Testis (tissue), 5 donors: ENCODE measurements at regions of chr11 and their contacts with region 1.

Region 1: GRCh38 chr11:95705485-95706124 is 84.0 kb downstream of the FAM76B start:
- DNase-seq: peak; percentile 93
- H3K4me3 ChIP-seq: no peak overlapping the region
- H3K27ac ChIP-seq: peak overlapping the region; percentile 2 to 81
- H3K4me1 ChIP-seq: peaks cover 24% of the 10 kb centered on the region
- H3K27me3 ChIP-seq: no peaks in the 10 kb centered on the region
- CTCF ChIP-seq: peak; percentile 87 to 95 (median 92)
- POLR2A ChIP-seq: no peak

Region 2: GRCh38 chr11:95231127-95231880 is 474.3 kb before region 1 on chr11 and contains the start of gene SESN3:
- intact Hi-C with region 1: loop called (anchors 10 kb)
- DNase-seq: peak; percentile 99
- H3K4me3 ChIP-seq: peak within 1 kb of the TSS; percentile 94 to 95
- H3K27ac ChIP-seq: peak within 1 kb of the TSS; percentile 89 to 97
- H3K4me1 ChIP-seq: no peaks in the 10 kb centered on the region
- H3K27me3 ChIP-seq: no peaks in the 10 kb centered on the region
- CTCF ChIP-seq: peak in 1 of 3 experiments; percentile 1
- POLR2A ChIP-seq: peak; percentile 62
- total RNA-seq, gene SESN3: 27.5 to 66.9 TPM

Region 3: DNA sequence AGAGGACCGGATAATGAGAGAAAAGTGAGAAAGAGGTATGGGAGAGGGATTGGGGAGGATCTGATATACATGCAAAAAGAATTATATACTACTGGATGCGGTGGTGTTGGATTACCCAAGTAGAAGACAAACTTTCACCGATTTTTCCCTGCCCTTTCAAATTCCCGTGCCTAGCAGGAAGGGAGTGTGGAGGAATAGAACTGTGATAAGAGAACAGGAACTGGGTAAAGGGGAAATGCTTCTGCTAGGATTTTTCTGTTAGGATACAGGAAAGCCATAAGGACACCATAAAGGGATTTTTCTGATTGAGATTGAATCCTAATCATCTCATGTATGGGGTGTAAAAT is 218.8 kb after region 1 on chr11:
- intact Hi-C with region 1: no loop called
- DNase-seq: no peak
- H3K4me3 ChIP-seq: peak overlapping the region; percentile 82 to 87
- H3K27ac ChIP-seq: peak overlapping the region; percentile 95 to 97
- H3K4me1 ChIP-seq: peaks cover 12% of the 10 kb centered on the region
- H3K27me3 ChIP-seq: no peaks in the 10 kb centered on the region
- CTCF ChIP-seq: no peak
- POLR2A ChIP-seq: no peak